CD4-positive, alpha-beta T cell (primary cell): ENCODE measurements at regions of chr11 and their contacts with region 1.

Region 1: DNA sequence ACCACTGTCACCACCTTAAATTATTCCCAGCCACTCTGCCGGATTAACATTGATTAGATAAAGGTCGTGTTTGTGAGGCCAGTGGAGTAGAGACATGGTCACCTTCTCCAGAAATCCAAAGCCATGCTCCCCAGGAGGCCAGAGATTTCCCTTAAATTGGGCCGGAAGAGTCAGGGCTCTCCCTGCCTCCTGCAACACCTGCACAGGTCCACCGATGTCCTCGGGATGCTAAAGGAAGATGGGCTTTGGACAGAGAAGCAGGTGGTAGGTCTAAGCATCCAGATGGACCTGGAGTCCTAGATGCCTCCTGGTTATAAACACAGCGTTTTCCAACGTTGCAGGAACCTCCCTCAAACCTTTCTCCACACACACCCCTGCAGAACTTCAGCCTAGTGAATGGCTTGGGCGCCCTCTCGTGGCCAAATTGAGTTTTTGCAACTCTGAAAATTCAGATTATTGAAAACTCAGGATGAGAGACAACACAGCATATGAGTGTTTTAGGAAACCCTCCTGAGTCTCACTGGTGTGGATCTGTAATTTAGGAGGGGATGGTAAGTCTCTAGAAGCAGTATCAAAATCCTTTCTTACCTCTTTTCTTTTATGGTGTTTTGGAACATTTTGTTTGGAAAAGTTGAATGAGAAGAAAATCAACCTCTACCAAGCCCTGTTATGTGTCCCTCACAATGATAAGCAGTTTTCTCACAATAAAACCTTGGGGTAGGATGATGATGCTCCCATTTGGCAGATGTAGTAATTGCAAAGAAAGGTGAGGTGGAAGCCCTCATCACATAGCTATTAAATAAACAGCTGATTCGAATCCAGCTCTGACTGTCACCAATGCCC is 109.6 kb downstream of the RRAS2 start:
- DNase-seq: peak; percentile 53 to 83 (median 68)
- ATAC-seq: peak; percentile 68
- H3K4me3 ChIP-seq: peak overlapping the region; percentile 36
- H3K4me3 Mint-ChIP-seq: peak overlapping the region; percentile 62
- H3K27ac ChIP-seq: no peak overlapping the region
- H3K27ac Mint-ChIP-seq: no peak overlapping the region
- H3K4me1 ChIP-seq: peaks cover 12% of the 10 kb centered on the region
- H3K4me1 Mint-ChIP-seq: peaks cover 28% of the 10 kb centered on the region
- H3K27me3 ChIP-seq: no peaks in the 10 kb centered on the region
- H3K27me3 Mint-ChIP-seq: no peaks in the 10 kb centered on the region
- CTCF ChIP-seq: peak; percentile 98

Region 2: DNA sequence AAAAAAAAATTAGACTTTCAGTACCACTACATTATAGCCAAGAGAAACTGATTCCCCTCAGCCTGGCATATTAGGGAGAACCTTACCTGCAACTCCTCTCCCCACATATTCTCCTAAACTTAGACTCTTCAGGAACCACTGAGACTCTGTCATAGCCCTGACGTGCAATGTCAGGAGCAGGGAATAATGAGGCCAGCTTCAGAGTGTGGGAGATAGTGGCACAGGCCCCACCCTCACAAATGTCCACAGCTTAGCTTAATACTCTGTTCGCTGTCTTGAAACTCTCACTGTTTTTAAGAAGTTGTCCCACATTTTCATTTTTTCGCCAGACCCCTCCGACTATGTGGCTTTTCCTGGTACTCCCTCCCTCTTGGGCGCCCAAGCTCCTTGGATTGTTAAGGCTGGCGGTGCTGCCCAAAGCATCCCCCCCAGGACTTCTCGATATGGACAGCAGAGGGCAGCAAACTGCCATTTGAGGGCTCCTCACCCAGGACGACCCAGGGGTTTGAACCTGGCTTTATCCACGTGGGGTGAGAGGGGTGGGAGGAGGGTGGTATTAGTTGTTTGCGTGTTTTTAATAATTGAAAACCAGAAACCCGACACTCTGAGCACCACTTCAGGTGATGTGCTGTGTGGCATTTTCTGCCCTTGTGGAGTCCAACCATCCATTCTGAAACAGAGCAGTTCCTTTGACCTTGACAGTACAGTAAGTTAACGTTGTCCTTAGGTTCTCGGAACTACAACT is 1285.4 kb before region 1 on chr11:
- CTCF ChIA-PET with region 1: no interaction called
- POLR2A ChIA-PET with region 1: no interaction called
- intact Hi-C with region 1: loop called in 1 of 2 experiments (anchors 10 kb)
- DNase-seq: peak; percentile 20 to 70 (median 46)
- ATAC-seq: peak; percentile 65
- H3K4me3 ChIP-seq: no peak overlapping the region
- H3K4me3 Mint-ChIP-seq: no peak overlapping the region
- H3K27ac ChIP-seq: no peak overlapping the region
- H3K27ac Mint-ChIP-seq: no peak overlapping the region
- H3K4me1 ChIP-seq: no peaks in the 10 kb centered on the region
- H3K4me1 Mint-ChIP-seq: no peaks in the 10 kb centered on the region
- H3K27me3 ChIP-seq: peaks cover 5 to 11% of the 10 kb centered on the region in 2 experiments
- H3K27me3 Mint-ChIP-seq: peaks cover 47% of the 10 kb centered on the region
- CTCF ChIP-seq: peak; percentile 67

Region 3: GRCh38 chr11:13486926-13487660 is 762.2 kb before region 1 on chr11:
- CTCF ChIA-PET with region 1: no interaction called
- POLR2A ChIA-PET with region 1: no interaction called
- intact Hi-C with region 1: loop called in 1 of 2 experiments (anchors 5 kb)
- DNase-seq: peak; percentile 34 to 80 (median 60)
- ATAC-seq: peak; percentile 84
- H3K4me3 ChIP-seq: peak overlapping the region; percentile 50
- H3K4me3 Mint-ChIP-seq: peak overlapping the region; percentile 77
- H3K27ac ChIP-seq: no peak overlapping the region
- H3K27ac Mint-ChIP-seq: peak overlapping the region; percentile 18
- H3K4me1 ChIP-seq: peaks cover 4% of the 10 kb centered on the region
- H3K4me1 Mint-ChIP-seq: peaks cover 5% of the 10 kb centered on the region
- H3K27me3 ChIP-seq: no peaks in the 10 kb centered on the region
- H3K27me3 Mint-ChIP-seq: peaks cover 12% of the 10 kb centered on the region
- CTCF ChIP-seq: no peak

Region 4: DNA sequence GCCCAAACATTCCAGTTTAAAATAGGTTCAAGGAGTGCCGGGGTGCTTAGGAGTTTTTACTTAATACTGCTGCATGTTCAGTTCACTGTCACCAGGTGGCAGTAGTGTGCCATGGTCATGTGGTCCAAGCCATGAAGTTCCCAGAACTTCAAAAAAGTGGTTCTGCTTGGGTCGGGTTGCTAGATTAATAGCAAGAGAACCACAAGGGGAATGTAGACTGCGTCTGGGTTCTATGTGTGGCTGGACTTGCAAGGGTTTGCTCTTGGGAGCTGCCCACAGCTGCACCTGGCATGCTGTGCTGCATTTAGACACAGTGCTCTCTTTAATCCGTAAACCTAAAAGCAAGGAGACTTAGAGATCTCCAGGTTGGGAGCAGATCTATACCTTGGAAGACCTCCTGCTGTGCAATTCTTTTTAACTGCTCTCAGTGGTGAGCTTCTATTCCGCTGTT is 293.3 kb before region 1 on chr11:
- CTCF ChIA-PET with region 1: no interaction called
- POLR2A ChIA-PET with region 1: interaction called, 4 read pairs
- intact Hi-C with region 1: loop called (anchors 1 kb)
- DNase-seq: peak; percentile 32 to 89 (median 52)
- ATAC-seq: peak; percentile 77
- H3K4me3 ChIP-seq: no peak overlapping the region
- H3K4me3 Mint-ChIP-seq: no peak overlapping the region
- H3K27ac ChIP-seq: no peak overlapping the region
- H3K27ac Mint-ChIP-seq: no peak overlapping the region
- H3K4me1 ChIP-seq: peaks cover 10% of the 10 kb centered on the region
- H3K4me1 Mint-ChIP-seq: no peaks in the 10 kb centered on the region
- H3K27me3 ChIP-seq: peaks cover 3 to 4% of the 10 kb centered on the region in 2 experiments
- H3K27me3 Mint-ChIP-seq: peaks cover 26% of the 10 kb centered on the region
- CTCF ChIP-seq: peak; percentile 86

Region 5: DNA sequence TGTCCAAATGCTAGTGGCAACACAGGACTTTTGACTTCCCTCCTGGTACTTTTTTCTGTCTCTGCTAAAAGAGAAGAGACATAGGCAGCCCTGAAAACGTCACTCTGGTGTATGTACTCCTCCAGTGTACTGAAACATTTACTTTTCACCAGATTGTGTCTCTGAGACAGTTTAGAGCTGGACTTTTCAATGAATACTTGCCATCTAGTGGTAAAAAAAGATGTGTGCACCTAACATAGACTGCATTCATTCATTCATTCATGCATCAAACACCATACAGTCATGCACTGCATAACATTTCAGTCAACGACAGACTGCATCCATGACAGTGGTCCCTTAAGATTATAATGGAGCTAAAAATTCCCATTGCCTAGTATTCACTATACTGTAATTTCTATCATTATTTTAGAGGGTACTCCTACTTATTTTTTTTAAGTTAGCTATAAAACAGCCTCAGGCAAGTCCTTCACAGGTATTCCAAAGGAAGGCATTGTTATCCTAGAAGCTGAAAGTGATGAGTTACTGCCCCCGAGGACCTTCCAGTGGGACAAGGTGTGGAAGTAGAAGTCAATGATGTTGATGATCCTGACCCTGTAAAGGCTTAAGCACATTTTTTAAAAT is 100.6 kb before region 1 on chr11:
- CTCF ChIA-PET with region 1: interaction called, 4 read pairs
- POLR2A ChIA-PET with region 1: no interaction called
- intact Hi-C with region 1: loop called (anchors 5 kb)
- DNase-seq: peak in 3 of 14 experiments; percentile 56 to 64 (median 63)
- ATAC-seq: peak; percentile 97
- H3K4me3 ChIP-seq: no peak overlapping the region
- H3K4me3 Mint-ChIP-seq: no peak overlapping the region
- H3K27ac ChIP-seq: no peak overlapping the region
- H3K27ac Mint-ChIP-seq: no peak overlapping the region
- H3K4me1 ChIP-seq: no peaks in the 10 kb centered on the region
- H3K4me1 Mint-ChIP-seq: peaks cover 5% of the 10 kb centered on the region
- H3K27me3 ChIP-seq: no peaks in the 10 kb centered on the region
- H3K27me3 Mint-ChIP-seq: no peaks in the 10 kb centered on the region
- CTCF ChIP-seq: peak; percentile 68